ENCODE measurements at regions of chr17 and their contacts with region 1.

Region 1: GRCh38 chr17:7403977-7404736 is at the start of gene TMEM256:
- DNase-seq: peak; percentile 98
- ATAC-seq: peak; percentile 87
- H3K4me3 ChIP-seq: peak within 1 kb of the TSS; percentile 57 to 95 (median 82)
- H3K4me3 Mint-ChIP-seq: peak within 1 kb of the TSS; percentile 98
- H3K27ac ChIP-seq: peak within 1 kb of the TSS; percentile 45 to 59
- H3K27ac Mint-ChIP-seq: peak within 1 kb of the TSS; percentile 94
- H3K4me1 ChIP-seq: peaks cover 17 to 20% of the 10 kb centered on the region in 2 donors
- H3K4me1 Mint-ChIP-seq: peaks cover 22% of the 10 kb centered on the region
- H3K27me3 ChIP-seq: peaks cover 0 to 27% (median 4%) of the 10 kb centered on the region in 4 experiments
- H3K27me3 Mint-ChIP-seq: peaks cover 17% of the 10 kb centered on the region
- CTCF ChIP-seq: no peak
- total RNA-seq, gene TMEM256: 64.5 and 67.8 TPM in 2 replicates

Region 2: DNA sequence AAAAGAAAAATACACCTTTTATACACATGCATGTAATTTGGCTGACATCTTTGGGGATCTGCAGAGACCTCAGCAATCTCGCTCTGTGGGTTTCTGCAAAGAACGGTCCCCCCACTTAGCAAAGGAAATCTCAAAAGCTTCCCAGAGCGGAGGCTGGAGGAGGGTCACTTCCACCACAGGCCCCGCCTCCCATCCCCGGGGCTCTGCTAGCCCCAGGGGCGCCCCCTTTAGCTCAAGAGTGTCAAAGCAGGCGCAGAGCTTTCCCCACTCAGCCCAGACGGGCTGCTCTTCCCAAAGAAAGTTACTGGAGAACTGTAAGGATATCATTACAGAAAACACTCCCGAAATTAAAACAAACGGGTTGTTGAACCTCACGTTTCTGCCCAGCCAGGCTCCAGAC is 702.4 kb before region 1 on chr17:
- CTCF ChIA-PET with region 1: no interaction called
- POLR2A ChIA-PET with region 1: no interaction called
- intact Hi-C with region 1: no loop called
- DNase-seq: peak; percentile 34
- ATAC-seq: peak; percentile 57
- H3K4me3 ChIP-seq: no peak overlapping the region
- H3K4me3 Mint-ChIP-seq: no peak overlapping the region
- H3K27ac ChIP-seq: no peak overlapping the region
- H3K27ac Mint-ChIP-seq: no peak overlapping the region
- H3K4me1 ChIP-seq: no peaks in the 10 kb centered on the region
- H3K4me1 Mint-ChIP-seq: peaks cover 3% of the 10 kb centered on the region
- H3K27me3 ChIP-seq: peaks cover 0 to 3% (median 1%) of the 10 kb centered on the region in 4 experiments
- H3K27me3 Mint-ChIP-seq: peaks cover 21% of the 10 kb centered on the region
- CTCF ChIP-seq: peak; percentile 37

Region 3: DNA sequence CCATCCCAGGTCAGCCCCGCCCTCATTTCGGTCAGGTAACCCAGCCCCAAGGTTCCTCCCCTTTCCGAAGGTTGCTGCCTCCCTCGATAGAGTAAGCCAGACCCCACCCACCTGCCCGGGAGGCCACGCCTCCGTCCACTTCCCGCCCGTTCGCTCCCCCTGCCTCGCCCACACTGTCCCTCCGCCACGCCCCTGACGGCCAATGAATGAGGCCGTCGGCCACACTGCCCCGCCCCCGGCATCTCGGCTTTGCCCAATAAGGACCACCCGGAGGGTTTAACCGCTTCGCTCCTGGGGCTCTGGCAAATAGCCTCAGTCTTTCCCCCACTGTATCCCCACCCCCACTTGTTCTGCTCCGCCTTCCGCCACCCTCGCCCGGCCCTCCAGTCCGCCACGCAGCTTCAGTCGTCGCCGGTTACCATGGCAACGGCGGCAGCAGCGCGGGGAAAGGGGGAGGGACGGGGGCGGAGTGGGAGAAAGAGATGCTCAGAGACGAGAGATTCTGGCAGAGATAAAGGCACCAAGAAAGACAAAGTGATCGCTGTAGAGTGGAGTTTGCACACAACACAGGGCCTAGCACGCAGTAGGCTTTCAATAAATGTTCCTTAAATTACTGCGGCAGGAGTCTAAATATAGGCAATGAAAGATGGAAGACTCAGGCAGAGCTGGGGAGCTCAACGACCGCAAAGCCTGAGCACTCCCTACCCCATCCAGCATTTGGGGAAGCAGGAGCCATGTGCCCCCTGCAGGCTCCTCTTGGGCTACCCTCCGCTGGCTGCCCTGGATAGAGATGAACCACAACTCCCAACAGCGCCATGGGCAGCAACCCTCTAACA is 189.6 kb before region 1 on chr17:
- CTCF ChIA-PET with region 1: no interaction called
- POLR2A ChIA-PET with region 1: interaction called, 6 read pairs
- intact Hi-C with region 1: loop called (anchors 2 kb)
- DNase-seq: peak; percentile 99
- ATAC-seq: peak; percentile 85
- H3K4me3 ChIP-seq: peak overlapping the region; percentile 39 to 66 (median 53)
- H3K4me3 Mint-ChIP-seq: peak overlapping the region; percentile 97
- H3K27ac ChIP-seq: peak overlapping the region; percentile 77 to 90
- H3K27ac Mint-ChIP-seq: peak overlapping the region; percentile 99
- H3K4me1 ChIP-seq: peaks cover 25 to 50% of the 10 kb centered on the region in 2 donors
- H3K4me1 Mint-ChIP-seq: peaks cover 49% of the 10 kb centered on the region
- H3K27me3 ChIP-seq: peaks cover 0 to 4% (median 0%) of the 10 kb centered on the region in 4 experiments
- H3K27me3 Mint-ChIP-seq: peaks cover 5% of the 10 kb centered on the region
- CTCF ChIP-seq: peak; percentile 44

Region 4: DNA sequence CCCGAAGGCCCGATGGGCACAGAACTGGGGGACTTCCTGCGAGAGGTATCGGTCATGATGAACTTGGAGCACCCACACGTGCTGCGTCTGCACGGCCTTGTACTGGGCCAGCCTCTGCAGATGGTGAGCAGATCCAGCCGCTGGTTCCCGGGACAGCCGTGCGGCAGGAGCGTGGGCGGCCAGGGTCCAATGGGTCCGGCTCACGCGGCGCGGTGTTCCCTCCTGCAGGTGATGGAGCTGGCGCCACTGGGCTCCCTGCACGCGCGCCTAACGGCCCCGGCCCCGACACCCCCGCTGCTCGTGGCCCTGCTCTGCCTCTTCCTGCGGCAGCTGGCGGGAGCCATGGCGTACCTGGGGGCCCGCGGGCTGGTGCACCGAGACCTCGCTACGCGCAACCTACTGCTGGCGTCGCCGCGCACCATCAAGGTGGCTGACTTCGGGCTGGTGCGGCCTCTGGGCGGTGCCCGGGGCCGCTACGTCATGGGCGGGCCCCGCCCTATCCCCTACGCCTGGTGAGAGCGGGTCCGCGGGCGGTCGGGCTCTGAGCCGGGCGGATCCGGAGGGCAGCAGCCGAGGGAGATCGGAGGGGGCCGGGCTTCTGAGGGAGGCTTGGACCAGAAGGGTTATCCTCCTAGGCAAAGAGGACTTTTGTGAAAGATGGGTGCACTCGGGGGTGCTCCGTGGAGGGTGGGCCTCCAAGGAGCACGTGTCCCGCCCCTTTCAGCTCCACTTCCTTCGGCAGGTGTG is 20.2 kb before region 1 on chr17:
- CTCF ChIA-PET with region 1: interaction called, 4 read pairs
- POLR2A ChIA-PET with region 1: interaction called, 10 read pairs
- intact Hi-C with region 1: loop called (anchors 1 kb)
- DNase-seq: peak; percentile 91
- ATAC-seq: peak; percentile 97
- H3K4me3 ChIP-seq: peak overlapping the region in 4 of 5 experiments; percentile 70 to 78 (median 76)
- H3K4me3 Mint-ChIP-seq: peak overlapping the region; percentile 89
- H3K27ac ChIP-seq: peak overlapping the region; percentile 60 to 72
- H3K27ac Mint-ChIP-seq: peak overlapping the region; percentile 91
- H3K4me1 ChIP-seq: peaks cover 19% of the 10 kb centered on the region in 2 donors
- H3K4me1 Mint-ChIP-seq: peaks cover 14% of the 10 kb centered on the region
- H3K27me3 ChIP-seq: peaks cover 0 to 43% (median 14%) of the 10 kb centered on the region in 4 experiments
- H3K27me3 Mint-ChIP-seq: peaks cover 32% of the 10 kb centered on the region
- CTCF ChIP-seq: no peak

Region 5: DNA sequence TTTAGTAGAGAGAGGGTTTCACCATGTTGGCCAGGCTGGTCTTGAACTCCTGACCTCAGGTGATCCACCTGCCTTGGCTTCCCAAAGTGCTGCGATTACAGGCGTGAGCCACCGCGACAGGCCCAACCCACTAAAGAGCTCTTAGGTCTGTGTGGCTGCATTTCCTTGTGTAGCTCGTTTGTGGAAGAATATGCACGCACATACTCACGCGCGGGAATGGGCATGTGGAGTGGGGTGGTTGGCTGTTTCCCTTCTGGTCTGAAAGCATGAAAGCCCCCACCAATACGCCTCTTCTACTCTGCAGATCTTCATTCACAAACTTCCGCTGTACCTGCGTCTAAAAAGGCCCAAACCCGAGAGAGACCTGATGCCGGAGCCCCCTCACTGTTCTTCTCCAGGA is 50.8 kb after region 1 on chr17:
- CTCF ChIA-PET with region 1: no interaction called
- POLR2A ChIA-PET with region 1: interaction called, 5 read pairs
- intact Hi-C with region 1: loop called (anchors 1 kb)
- DNase-seq: no peak
- ATAC-seq: no peak
- H3K4me3 ChIP-seq: peak overlapping the region; percentile 55 to 99 (median 90)
- H3K4me3 Mint-ChIP-seq: peak overlapping the region; percentile 91
- H3K27ac ChIP-seq: no peak overlapping the region
- H3K27ac Mint-ChIP-seq: peak overlapping the region; percentile 81
- H3K4me1 ChIP-seq: peaks cover 5 to 10% of the 10 kb centered on the region in 2 donors
- H3K4me1 Mint-ChIP-seq: peaks cover 11% of the 10 kb centered on the region
- H3K27me3 ChIP-seq: no peaks in the 10 kb centered on the region
- H3K27me3 Mint-ChIP-seq: peaks cover 4% of the 10 kb centered on the region
- CTCF ChIP-seq: no peak